CD8-positive, alpha-beta T cell (primary cell): ENCODE measurements at regions of chr6 and their contacts with region 1.

Region 1: GRCh38 chr6:167047554-167047953 is 48.4 kb downstream of the CEP43 start:
- DNase-seq: peak in 6 of 9 experiments; percentile 22 to 59 (median 47)
- ATAC-seq: peak; percentile 80
- H3K4me3 ChIP-seq: peak overlapping the region in 1 of 2 experiments; percentile 3
- H3K4me3 Mint-ChIP-seq: peak overlapping the region; percentile 73
- H3K27ac ChIP-seq: no peak overlapping the region
- H3K27ac Mint-ChIP-seq: peak overlapping the region; percentile 62
- H3K4me1 ChIP-seq: peaks cover 12% of the 10 kb centered on the region
- H3K4me1 Mint-ChIP-seq: peaks cover 25% of the 10 kb centered on the region
- H3K27me3 ChIP-seq: no peaks in the 10 kb centered on the region
- H3K27me3 Mint-ChIP-seq: no peaks in the 10 kb centered on the region
- CTCF ChIP-seq: no peak

Region 2: GRCh38 chr6:165232731-165233488 is 1814.6 kb before region 1 on chr6:
- CTCF ChIA-PET with region 1: no interaction called
- POLR2A ChIA-PET with region 1: no interaction called
- intact Hi-C with region 1: no loop called
- DNase-seq: no peak
- ATAC-seq: no peak
- H3K4me3 ChIP-seq: no peak overlapping the region
- H3K4me3 Mint-ChIP-seq: no peak overlapping the region
- H3K27ac ChIP-seq: no peak overlapping the region
- H3K27ac Mint-ChIP-seq: no peak overlapping the region
- H3K4me1 ChIP-seq: no peaks in the 10 kb centered on the region
- H3K4me1 Mint-ChIP-seq: no peaks in the 10 kb centered on the region
- H3K27me3 ChIP-seq: no peaks in the 10 kb centered on the region
- H3K27me3 Mint-ChIP-seq: no peaks in the 10 kb centered on the region
- CTCF ChIP-seq: no peak

Region 3: GRCh38 chr6:166382933-166383801 is 664.4 kb before region 1 on chr6 and contains the start of gene MPC1:
- CTCF ChIA-PET with region 1: no interaction called
- POLR2A ChIA-PET with region 1: no interaction called
- intact Hi-C with region 1: no loop called
- DNase-seq: peak; percentile 88 to 97 (median 93)
- ATAC-seq: peak; percentile 92
- H3K4me3 ChIP-seq: peak within 1 kb of the TSS; percentile 74 to 77
- H3K4me3 Mint-ChIP-seq: peak within 1 kb of the TSS; percentile 95
- H3K27ac ChIP-seq: peak within 1 kb of the TSS; percentile 73 to 75
- H3K27ac Mint-ChIP-seq: peak within 1 kb of the TSS; percentile 92
- H3K4me1 ChIP-seq: peaks cover 7% of the 10 kb centered on the region
- H3K4me1 Mint-ChIP-seq: peaks cover 14% of the 10 kb centered on the region
- H3K27me3 ChIP-seq: no peaks in the 10 kb centered on the region
- H3K27me3 Mint-ChIP-seq: no peaks in the 10 kb centered on the region
- CTCF ChIP-seq: no peak
- total RNA-seq, gene MPC1: 18.4 to 22.2 TPM

Region 4: DNA sequence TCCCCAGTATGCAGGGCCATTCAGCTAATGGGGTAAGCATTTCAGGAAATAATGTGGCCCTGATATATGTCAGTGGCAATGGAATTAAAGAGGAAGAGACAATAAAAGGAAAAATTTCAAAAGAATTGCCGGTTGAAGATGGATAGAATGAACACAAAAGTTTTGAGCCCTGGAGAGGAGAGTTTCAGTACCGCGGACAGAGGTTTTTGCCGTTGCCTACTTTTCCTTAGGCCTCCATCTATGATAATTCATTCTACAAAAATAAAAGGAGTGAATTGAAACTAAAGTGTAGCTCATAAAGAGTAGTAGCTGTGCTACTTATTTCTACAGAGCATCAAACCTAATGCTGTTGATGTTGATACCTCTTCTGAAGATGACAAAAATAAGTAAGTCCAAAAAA is 231.9 kb before region 1 on chr6:
- CTCF ChIA-PET with region 1: no interaction called
- POLR2A ChIA-PET with region 1: no interaction called
- intact Hi-C with region 1: no loop called
- DNase-seq: no peak
- ATAC-seq: no peak
- H3K4me3 ChIP-seq: no peak overlapping the region
- H3K4me3 Mint-ChIP-seq: no peak overlapping the region
- H3K27ac ChIP-seq: no peak overlapping the region
- H3K27ac Mint-ChIP-seq: no peak overlapping the region
- H3K4me1 ChIP-seq: no peaks in the 10 kb centered on the region
- H3K4me1 Mint-ChIP-seq: no peaks in the 10 kb centered on the region
- H3K27me3 ChIP-seq: no peaks in the 10 kb centered on the region
- H3K27me3 Mint-ChIP-seq: no peaks in the 10 kb centered on the region
- CTCF ChIP-seq: no peak

Region 5: GRCh38 chr6:167093922-167094432 is 46.4 kb after region 1 on chr6:
- CTCF ChIA-PET with region 1: no interaction called
- POLR2A ChIA-PET with region 1: no interaction called
- intact Hi-C with region 1: loop called in 1 of 2 experiments (anchors 2 kb)
- DNase-seq: peak; percentile 49 to 90 (median 66)
- ATAC-seq: peak; percentile 74
- H3K4me3 ChIP-seq: peak overlapping the region; percentile 48 to 56
- H3K4me3 Mint-ChIP-seq: peak overlapping the region; percentile 78
- H3K27ac ChIP-seq: peak overlapping the region in 1 of 2 experiments; percentile 52
- H3K27ac Mint-ChIP-seq: peak overlapping the region; percentile 86
- H3K4me1 ChIP-seq: peaks cover 58% of the 10 kb centered on the region
- H3K4me1 Mint-ChIP-seq: peaks cover 60% of the 10 kb centered on the region
- H3K27me3 ChIP-seq: no peaks in the 10 kb centered on the region
- H3K27me3 Mint-ChIP-seq: no peaks in the 10 kb centered on the region
- CTCF ChIP-seq: no peak

Region 6: DNA sequence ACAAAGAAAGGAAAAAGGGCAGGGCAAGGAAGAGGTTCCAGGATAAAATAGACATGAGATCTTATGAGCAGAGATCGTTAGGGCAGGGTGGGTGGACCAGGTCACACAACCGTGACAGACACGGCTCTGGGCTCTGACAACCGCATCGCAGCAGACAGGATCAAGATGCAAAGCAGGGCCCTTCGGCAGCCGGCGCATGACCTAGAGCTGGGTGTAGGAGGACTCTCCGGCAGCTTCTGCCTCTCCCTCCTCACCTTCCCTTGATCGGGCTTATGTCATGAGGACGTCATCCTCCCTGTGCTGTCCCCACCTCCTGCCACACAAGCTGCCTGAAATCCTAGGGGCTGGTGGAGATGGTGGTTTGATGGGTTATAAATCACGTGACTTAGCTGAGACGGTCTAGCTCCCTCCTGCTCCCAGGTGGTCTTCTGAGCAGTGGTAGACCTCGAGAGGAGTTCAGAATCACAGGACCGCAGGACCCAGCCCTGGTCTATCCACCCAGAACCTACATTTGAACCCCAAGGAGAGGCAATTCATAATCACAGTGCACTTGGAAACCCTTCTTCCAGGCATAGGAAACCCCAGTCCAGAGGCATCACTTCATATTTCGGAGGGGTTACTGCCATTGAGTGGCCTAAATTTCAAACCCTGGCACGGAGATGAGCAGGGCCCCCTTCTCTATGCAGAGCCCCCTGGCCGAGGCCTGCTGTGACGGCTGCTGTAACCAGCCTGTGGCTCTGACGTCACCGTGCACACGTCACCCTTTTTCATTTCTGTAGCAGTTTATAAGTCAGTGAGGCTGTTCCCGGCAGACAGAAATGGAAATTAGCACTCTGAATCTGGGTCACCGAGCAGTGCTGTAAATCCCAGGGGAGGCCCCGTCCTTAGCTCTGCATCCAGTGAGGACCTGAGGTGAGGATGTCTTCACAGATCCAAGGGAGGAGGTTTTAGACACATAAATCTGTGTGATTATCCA is 66.7 kb after region 1 on chr6:
- CTCF ChIA-PET with region 1: no interaction called
- POLR2A ChIA-PET with region 1: no interaction called
- intact Hi-C with region 1: loop called in 1 of 2 experiments (anchors 5 kb)
- DNase-seq: peak in 5 of 9 experiments; percentile 27 to 78 (median 67)
- ATAC-seq: peak; percentile 81
- H3K4me3 ChIP-seq: no peak overlapping the region
- H3K4me3 Mint-ChIP-seq: peak overlapping the region; percentile 82
- H3K27ac ChIP-seq: peak overlapping the region in 1 of 2 experiments; percentile 34
- H3K27ac Mint-ChIP-seq: peak overlapping the region; percentile 94
- H3K4me1 ChIP-seq: peaks cover 6% of the 10 kb centered on the region
- H3K4me1 Mint-ChIP-seq: peaks cover 44% of the 10 kb centered on the region
- H3K27me3 ChIP-seq: no peaks in the 10 kb centered on the region
- H3K27me3 Mint-ChIP-seq: peaks cover 3% of the 10 kb centered on the region
- CTCF ChIP-seq: no peak

Region 7: GRCh38 chr6:167426651-167427050 is 379.1 kb after region 1 on chr6:
- CTCF ChIA-PET with region 1: no interaction called
- POLR2A ChIA-PET with region 1: no interaction called
- intact Hi-C with region 1: no loop called
- DNase-seq: no peak
- ATAC-seq: no peak
- H3K4me3 ChIP-seq: no peak overlapping the region
- H3K4me3 Mint-ChIP-seq: no peak overlapping the region
- H3K27ac ChIP-seq: no peak overlapping the region
- H3K27ac Mint-ChIP-seq: no peak overlapping the region
- H3K4me1 ChIP-seq: no peaks in the 10 kb centered on the region
- H3K4me1 Mint-ChIP-seq: no peaks in the 10 kb centered on the region
- H3K27me3 ChIP-seq: no peaks in the 10 kb centered on the region
- H3K27me3 Mint-ChIP-seq: peaks cover 22% of the 10 kb centered on the region
- CTCF ChIP-seq: no peak